A549 (cell line): ENCODE measurements at regions of chr2 and their contacts with region 1.

Region 1: DNA sequence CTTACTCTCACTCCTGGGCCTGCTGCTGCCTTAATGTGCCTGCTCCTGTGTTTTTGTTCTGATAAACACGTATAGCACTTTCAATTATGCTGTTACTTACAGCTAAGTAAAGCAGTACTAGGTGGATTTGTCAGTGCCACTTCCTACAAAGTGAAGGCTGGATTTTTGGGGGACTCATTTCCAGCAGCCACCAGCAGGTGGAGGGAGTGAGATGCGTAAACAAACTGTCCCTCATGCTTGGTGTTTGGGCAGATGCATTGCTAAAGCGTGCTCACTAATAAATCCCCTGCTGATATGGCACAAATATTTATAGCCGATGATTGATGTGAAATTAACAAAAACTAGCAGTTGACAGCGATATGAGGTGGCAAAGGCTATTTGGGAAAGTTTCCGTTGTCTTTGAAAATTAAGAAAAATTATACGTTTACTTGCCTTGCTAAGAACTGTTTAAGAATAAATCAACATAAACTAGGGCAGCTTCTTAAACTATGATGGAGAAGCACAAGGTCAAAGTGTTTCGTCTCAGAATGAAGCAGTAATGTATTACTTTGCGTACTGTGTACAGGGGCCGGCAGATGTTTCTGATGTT is 101.7 kb downstream of the AGAP1 start:
- DNase-seq: peak; percentile 56 to 75
- ATAC-seq: peak; percentile 79 to 82; a peak in 5 of 6 replicates
- H3K4me3 ChIP-seq: no peak overlapping the region
- H3K27ac ChIP-seq: peak overlapping the region in 1 of 2 experiments; percentile 18; a peak in 1 of 6 replicates
- H3K4me1 ChIP-seq: peaks cover 15% of the 10 kb centered on the region
- CTCF ChIP-seq: peak; percentile 85
- EP300 ChIP-seq: no peak
- POLR2A ChIP-seq: no peak
- RAD21 ChIP-seq: peak; percentile 72 to 78

Region 2: GRCh38 chr2:235135990-235136561 is 459.4 kb before region 1 on chr2:
- CTCF ChIA-PET with region 1: interaction called, 205 read pairs
- POLR2A ChIA-PET with region 1: no interaction called
- DNase-seq: peak; percentile 78 to 90
- ATAC-seq: peak; percentile 97 to 99
- H3K4me3 ChIP-seq: no peak overlapping the region
- H3K27ac ChIP-seq: peak overlapping the region; percentile 47 to 57; a peak in 4 of 6 replicates
- H3K4me1 ChIP-seq: peaks cover 7% of the 10 kb centered on the region; the same call in 2 of the 3 replicates
- CTCF ChIP-seq: peak; percentile 81
- EP300 ChIP-seq: no peak
- POLR2A ChIP-seq: no peak
- RAD21 ChIP-seq: peak; percentile 92 to 95

Region 3: DNA sequence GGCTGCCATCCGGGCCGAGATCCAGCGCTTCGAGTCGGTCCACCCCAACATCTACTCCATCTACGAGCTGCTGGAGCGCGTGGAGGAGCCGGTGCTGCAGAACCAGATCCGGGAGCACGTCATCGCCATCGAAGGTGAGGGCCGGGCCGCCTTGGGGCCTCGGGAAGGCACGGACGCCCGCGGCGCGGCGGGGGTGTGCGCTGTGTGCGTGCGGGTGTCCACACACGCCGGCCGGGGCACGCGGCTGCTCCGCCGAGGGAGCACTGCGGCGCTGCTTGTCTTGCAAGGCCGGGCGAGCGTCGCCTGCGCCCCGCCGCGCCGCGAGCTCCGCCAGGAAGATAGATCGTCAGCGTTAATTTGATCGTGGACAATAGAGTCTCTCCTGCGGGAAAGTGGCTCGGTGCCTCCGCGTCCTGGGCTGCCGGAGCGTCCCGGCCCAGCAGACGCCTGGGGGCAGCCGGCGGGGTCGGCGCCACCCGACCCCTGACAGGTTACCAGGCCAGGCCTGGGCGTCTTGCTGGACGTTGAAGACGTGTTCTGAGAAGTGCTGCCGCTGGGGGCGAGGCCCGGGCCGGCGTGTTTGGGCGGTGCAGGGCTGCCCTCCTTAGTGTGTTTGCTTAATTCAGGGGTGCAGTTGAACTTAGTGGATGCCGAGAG is 100.7 kb before region 1 on chr2:
- CTCF ChIA-PET with region 1: interaction called, 57 read pairs
- POLR2A ChIA-PET with region 1: no interaction called
- DNase-seq: peak in 1 of 2 experiments; percentile 50
- ATAC-seq: peak; percentile 49 to 75
- H3K4me3 ChIP-seq: peak overlapping the region; percentile 93
- H3K27ac ChIP-seq: peak overlapping the region; percentile 98 to 99
- H3K4me1 ChIP-seq: peaks cover 33% of the 10 kb centered on the region
- CTCF ChIP-seq: peak; percentile 28; the same call in 2 of the 3 replicates
- EP300 ChIP-seq: no peak
- POLR2A ChIP-seq: no peak
- RAD21 ChIP-seq: peak in 1 of 2 experiments; percentile 37; a peak in 3 of 5 replicates

Region 4: DNA sequence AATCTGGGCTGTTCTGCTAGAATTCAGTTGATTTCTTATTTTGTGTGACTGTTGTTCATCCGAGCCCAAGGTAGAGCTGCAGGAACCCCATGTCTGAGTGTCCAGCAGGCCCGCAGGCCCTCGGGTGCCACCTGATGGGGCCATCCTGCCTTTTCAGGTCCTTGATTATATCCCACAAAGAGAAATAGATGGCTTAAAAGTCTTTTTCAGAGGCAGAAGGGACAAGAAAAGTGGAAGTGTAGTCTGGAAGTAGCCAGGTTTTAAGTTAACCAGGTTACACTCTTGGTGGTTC is 49.4 kb before region 1 on chr2:
- CTCF ChIA-PET with region 1: no interaction called
- POLR2A ChIA-PET with region 1: no interaction called
- DNase-seq: no peak
- ATAC-seq: no peak
- H3K4me3 ChIP-seq: no peak overlapping the region
- H3K27ac ChIP-seq: no peak overlapping the region
- H3K4me1 ChIP-seq: peaks cover 4% of the 10 kb centered on the region; the same call in 1 of the 3 replicates
- CTCF ChIP-seq: no peak
- EP300 ChIP-seq: no peak
- POLR2A ChIP-seq: no peak
- RAD21 ChIP-seq: no peak

Region 5: DNA sequence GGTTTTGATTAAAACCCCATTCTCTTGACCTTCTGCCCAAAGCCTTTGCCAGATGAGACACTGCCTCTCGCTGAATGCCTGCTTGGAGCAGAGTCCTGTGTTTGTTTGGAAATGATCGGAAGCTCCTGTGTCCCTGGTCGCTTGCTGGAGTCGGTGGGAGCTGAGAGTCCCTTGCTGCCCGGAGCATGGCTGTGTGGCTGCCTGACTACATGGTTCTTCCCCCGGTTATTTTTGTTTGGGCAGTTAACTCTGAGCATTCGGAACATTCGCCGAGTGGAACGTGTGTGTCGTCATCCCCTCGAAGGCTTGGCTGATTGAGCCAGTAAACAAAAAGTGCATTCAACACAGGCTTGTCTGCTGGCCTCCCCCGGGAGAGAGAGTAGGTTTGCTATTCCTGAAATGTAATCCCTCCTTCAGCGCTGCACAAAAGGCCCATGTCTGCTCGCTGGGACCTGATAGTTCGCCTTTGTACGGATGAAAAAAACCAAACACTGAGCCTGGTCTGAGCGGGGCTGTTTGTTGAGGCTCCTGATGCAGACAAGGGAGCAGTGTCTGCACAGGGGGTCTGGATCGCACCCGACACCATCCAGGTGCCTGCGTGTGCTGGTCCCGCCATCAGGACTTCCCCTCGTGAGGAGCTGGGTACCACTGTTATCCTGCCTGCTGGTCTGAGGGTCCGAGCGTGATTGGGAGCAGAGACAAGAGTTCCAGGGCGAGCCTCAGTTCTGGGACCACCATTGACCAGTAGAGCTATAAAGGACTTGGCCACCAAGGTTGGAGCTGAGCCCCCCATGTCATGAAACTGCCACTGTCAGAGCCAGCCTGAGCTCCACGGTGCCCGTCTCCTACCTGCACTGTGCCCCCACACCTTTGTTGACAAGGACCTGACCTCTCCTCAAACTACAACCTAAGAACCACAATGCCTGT is 17.8 kb before region 1 on chr2:
- CTCF ChIA-PET with region 1: interaction called, 14 read pairs
- POLR2A ChIA-PET with region 1: no interaction called
- DNase-seq: no peak
- ATAC-seq: no peak
- H3K4me3 ChIP-seq: no peak overlapping the region
- H3K27ac ChIP-seq: no peak overlapping the region
- H3K4me1 ChIP-seq: no peaks in the 10 kb centered on the region
- CTCF ChIP-seq: no peak
- EP300 ChIP-seq: no peak
- POLR2A ChIP-seq: no peak
- RAD21 ChIP-seq: no peak

Region 6: DNA sequence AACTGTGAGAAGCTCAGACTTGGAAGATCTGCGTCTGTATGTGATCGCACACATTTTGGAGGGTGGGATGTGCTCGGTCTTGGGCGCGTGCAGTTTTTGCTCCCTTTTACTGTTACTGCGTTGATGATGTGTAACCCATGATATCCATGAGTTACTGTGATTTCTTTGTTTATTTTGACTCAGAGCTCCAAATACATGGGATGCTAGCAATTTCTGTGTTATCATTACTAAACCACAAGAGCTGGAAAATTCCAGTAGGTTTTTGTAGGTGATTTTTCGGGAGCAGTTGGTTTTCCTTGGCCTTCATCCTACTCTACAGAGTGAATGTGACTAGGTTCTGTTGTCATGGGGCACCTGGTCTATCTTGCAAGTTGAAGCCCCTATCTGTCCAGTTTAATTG is 22.5 kb after region 1 on chr2:
- CTCF ChIA-PET with region 1: interaction called, 11 read pairs
- POLR2A ChIA-PET with region 1: no interaction called
- DNase-seq: no peak
- ATAC-seq: peak in 1 of 2 experiments; percentile 47; a peak in 1 of 6 replicates
- H3K4me3 ChIP-seq: no peak overlapping the region
- H3K27ac ChIP-seq: no peak overlapping the region
- H3K4me1 ChIP-seq: peaks cover 12% of the 10 kb centered on the region
- CTCF ChIP-seq: no peak
- EP300 ChIP-seq: no peak
- POLR2A ChIP-seq: no peak
- RAD21 ChIP-seq: no peak

Region 7: DNA sequence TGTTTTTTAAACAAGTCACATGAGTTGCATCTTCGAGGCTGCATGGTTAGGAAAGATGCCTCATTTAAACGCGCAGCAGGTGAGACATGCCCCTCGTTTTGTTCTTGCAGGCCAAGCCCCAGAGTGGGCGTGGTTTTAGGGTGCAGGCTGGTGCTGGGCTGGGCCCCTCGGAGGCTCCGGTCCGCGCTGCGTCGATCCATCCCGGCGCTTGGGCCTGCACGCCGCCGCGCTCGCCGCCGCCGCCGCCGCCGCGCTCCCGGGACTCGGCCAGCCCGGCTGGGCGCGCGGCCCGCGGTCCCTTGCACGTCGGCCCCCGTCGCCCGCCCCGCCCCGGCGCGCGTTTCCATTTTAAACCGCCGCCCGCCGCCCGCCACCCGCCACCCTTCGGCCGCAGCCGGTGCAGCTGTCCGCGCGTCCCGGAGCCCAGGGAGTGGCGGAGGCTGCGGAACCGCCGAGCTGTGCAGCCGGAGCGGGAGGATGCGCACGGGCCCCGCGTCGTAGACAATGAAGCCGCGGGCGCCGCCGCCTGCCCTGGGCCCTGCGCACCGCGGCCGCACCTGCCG is 73.8 kb after region 1 on chr2:
- CTCF ChIA-PET with region 1: interaction called, 34 read pairs
- POLR2A ChIA-PET with region 1: no interaction called
- DNase-seq: peak; percentile 41 to 82
- ATAC-seq: peak; percentile 72 to 76
- H3K4me3 ChIP-seq: peak overlapping the region; percentile 83
- H3K27ac ChIP-seq: peak overlapping the region; percentile 59 to 87
- H3K4me1 ChIP-seq: peaks cover 18% of the 10 kb centered on the region
- CTCF ChIP-seq: no peak
- EP300 ChIP-seq: no peak
- POLR2A ChIP-seq: no peak
- RAD21 ChIP-seq: no peak

Region 8: DNA sequence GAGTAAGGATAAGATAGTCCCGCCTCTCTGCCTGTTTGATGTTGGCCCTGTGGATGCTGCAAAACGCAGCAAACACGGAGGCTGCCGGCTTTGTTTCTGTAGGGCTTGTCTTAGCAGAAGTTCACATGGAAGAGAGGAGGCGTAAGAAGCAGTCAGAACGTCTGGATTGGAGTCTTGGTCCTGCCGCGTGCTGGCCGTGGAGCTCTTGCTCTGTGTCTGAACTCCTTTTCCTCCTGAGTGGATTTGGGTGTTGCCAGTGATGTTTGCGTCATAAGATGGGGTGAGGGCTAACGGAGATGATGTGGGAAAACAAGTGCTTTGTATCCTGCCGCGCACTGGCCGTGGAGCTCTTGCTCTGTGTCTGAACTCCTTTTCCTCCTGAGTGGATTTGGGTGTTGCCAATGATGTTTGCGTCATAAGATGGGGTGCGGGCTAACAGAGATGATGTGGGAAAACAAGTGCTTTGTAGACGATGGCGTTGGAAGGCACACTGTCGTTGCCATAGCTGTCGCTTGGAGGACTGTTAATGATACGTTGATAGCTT is 139.2 kb after region 1 on chr2:
- CTCF ChIA-PET with region 1: interaction called, 190 read pairs
- POLR2A ChIA-PET with region 1: no interaction called
- DNase-seq: no peak
- ATAC-seq: no peak
- H3K4me3 ChIP-seq: no peak overlapping the region
- H3K27ac ChIP-seq: no peak overlapping the region
- H3K4me1 ChIP-seq: no peaks in the 10 kb centered on the region
- CTCF ChIP-seq: no peak
- EP300 ChIP-seq: no peak
- POLR2A ChIP-seq: no peak
- RAD21 ChIP-seq: no peak